Activated CD8-positive, alpha-beta T cell treated with anti-CD3 and anti-CD28 coated beads for 36 hours (primary cell): ENCODE measurements at regions of chr19 and their contacts with region 1.

Region 1: DNA sequence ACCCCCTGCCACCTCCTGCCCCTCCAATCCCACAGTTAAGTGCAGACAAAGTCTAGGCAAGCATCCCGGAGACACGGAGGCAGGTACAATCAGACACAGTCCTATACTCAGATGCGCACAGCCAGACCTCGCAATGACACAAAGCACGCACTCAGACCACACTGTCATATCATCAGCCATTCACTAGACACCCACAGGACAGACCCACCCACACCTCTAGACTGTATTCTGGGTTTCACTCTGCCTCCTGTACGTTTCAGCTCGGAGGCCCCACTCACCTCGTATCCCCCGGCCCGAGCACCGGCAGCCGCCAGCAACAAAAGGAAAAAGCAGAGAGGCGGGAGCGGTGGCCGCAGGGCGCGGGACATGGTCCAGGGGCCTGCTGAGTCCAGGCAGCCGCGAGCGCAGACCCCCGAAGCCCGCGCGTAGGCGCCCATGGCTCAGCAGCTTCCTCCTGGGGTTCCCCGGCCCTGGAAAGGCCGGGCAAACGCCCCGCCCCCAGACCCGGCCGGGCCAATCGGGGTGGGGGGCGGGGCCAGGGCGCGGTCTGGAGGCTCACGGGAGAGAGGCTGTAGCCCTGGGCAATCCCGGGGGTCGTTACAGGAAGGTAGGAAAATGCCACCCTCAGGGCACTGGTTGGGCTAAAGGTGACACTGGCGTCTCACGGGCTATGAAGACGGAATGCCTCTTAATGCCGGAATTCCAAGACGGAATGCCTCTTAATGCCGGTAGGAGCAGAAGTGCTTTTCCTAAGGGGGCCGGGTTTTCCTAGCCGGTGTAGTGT is at the starts of genes MAN2B1 and WDR83:
- DNase-seq: peak; percentile 88
- ATAC-seq: peak; percentile 74
- H3K4me3 Mint-ChIP-seq: peak within 1 kb of the TSS; percentile 99
- H3K27ac Mint-ChIP-seq: peak within 1 kb of the TSS; percentile 95
- H3K4me1 Mint-ChIP-seq: peaks cover 37% of the 10 kb centered on the region
- H3K27me3 Mint-ChIP-seq: no peaks in the 10 kb centered on the region
- CTCF ChIP-seq: no peak
- total RNA-seq, gene MAN2B1: 127 to 135 TPM
- total RNA-seq, gene WDR83: 17.5 to 23.2 TPM

Region 2: DNA sequence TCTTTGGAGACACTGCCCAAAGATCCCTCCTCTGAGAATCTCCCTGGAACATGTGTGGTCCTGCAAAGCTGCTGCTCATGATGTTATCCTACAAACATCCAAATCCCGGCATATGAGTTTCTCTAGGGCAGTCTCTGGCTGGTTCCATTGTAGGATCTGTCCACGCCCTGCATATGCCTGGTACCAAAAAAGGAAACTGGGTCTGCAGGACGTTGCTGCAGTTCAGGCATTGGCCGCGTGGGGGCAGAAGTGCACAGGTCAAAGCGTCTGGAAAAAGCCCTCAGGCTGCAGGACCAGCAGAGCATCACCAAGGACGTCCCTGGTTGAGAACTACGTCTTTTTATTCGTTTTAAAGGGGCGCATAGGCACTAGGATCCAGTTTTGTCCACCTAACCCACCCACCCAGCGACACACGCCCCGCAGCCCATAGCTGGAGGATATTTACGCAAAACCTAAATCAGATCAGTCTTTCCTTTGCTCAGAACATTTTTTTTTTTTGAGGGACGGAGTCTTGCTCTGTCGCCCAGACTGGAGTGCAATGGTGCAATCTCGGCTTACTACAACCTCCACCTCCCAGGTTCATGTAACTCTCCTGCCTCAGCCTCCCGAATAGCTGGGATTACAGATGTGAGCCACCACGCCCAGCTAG is 102.3 kb before region 1 on chr19:
- CTCF ChIA-PET with region 1: interaction called, 19 read pairs
- POLR2A ChIA-PET with region 1: no interaction called
- intact Hi-C with region 1: loop called (anchors 5 kb)
- DNase-seq: peak; percentile 96
- ATAC-seq: peak; percentile 99
- H3K4me3 Mint-ChIP-seq: no peak overlapping the region
- H3K27ac Mint-ChIP-seq: no peak overlapping the region
- H3K4me1 Mint-ChIP-seq: peaks cover 4% of the 10 kb centered on the region
- H3K27me3 Mint-ChIP-seq: no peaks in the 10 kb centered on the region
- CTCF ChIP-seq: peak; percentile 85

Region 3: GRCh38 chr19:12580163-12580694 is 86.2 kb before region 1 on chr19:
- CTCF ChIA-PET with region 1: no interaction called
- POLR2A ChIA-PET with region 1: no interaction called
- intact Hi-C with region 1: no loop called
- DNase-seq: no peak
- ATAC-seq: no peak
- H3K4me3 Mint-ChIP-seq: no peak overlapping the region
- H3K27ac Mint-ChIP-seq: no peak overlapping the region
- H3K4me1 Mint-ChIP-seq: no peaks in the 10 kb centered on the region
- H3K27me3 Mint-ChIP-seq: no peaks in the 10 kb centered on the region
- CTCF ChIP-seq: no peak

Region 4: GRCh38 chr19:12610540-12611360 is 55.7 kb before region 1 on chr19 and contains the starts of genes ZNF490 and ZNF791:
- CTCF ChIA-PET with region 1: interaction called, 5 read pairs
- POLR2A ChIA-PET with region 1: interaction called, 5 read pairs
- intact Hi-C with region 1: loop called (anchors 10 kb)
- DNase-seq: peak; percentile 99
- ATAC-seq: peak; percentile 94
- H3K4me3 Mint-ChIP-seq: peak within 1 kb of the TSS; percentile 94
- H3K27ac Mint-ChIP-seq: peak within 1 kb of the TSS; percentile 99
- H3K4me1 Mint-ChIP-seq: peaks cover 29% of the 10 kb centered on the region
- H3K27me3 Mint-ChIP-seq: no peaks in the 10 kb centered on the region
- CTCF ChIP-seq: no peak
- total RNA-seq, gene ZNF490: 6.8 to 9.3 TPM
- total RNA-seq, gene ZNF791: 15.1 to 16.7 TPM

Region 5: GRCh38 chr19:12639901-12640613 is 26.4 kb before region 1 on chr19:
- CTCF ChIA-PET with region 1: interaction called, 11 read pairs
- POLR2A ChIA-PET with region 1: interaction called, 5 read pairs
- intact Hi-C with region 1: no loop called
- DNase-seq: peak; percentile 96
- ATAC-seq: peak; percentile 93
- H3K4me3 Mint-ChIP-seq: peak overlapping the region; percentile 73
- H3K27ac Mint-ChIP-seq: peak overlapping the region; percentile 84
- H3K4me1 Mint-ChIP-seq: peaks cover 23% of the 10 kb centered on the region
- H3K27me3 Mint-ChIP-seq: no peaks in the 10 kb centered on the region
- CTCF ChIP-seq: peak; percentile 89

Region 6: DNA sequence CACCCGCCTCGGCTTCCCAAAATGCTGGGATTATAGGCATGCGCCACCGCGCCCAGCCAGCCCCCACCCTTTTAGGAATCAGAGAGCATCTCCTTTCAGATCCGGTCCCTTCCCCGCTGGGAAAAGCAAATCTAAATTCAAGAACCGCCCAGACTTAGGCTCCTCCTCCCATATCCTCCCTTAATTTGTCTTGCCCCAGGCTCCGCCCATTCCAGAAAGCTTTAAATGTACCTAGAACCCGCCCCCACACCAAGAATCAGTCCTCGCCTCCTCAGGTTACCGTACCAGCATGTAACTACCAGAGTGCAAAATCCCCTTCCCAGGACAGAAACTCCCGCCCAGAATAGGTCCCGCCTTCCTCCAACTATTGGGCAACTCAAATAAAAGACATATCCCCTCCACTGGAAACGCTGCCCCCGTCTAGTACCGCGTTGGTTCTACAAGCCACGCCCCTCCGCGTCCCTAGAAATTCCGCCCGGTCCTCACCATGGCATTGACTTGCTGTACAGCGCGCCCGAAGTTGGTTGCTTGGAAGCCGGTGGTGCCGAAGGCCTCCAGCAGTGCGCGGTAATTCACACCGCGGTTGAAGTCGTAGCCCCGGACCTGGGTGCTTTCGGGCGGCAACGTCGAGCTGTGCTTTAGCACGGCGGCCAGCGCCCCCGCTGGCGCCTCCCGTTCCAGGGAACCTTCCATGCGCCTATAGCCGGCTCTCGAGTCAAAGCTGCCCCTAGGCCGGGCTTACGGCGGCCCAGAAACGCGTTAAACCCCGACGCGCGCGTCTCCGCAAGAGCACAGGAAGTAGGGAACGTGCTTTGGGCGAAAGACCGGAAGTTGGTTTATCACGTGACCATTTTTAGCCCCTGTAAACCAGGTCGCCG is 14.9 kb after region 1 on chr19 and contains the start of gene DHPS:
- CTCF ChIA-PET with region 1: interaction called, 20 read pairs
- POLR2A ChIA-PET with region 1: interaction called, 29 read pairs
- intact Hi-C with region 1: no loop called
- DNase-seq: peak; percentile 97
- ATAC-seq: peak; percentile 89
- H3K4me3 Mint-ChIP-seq: peak within 1 kb of the TSS; percentile 93
- H3K27ac Mint-ChIP-seq: peak within 1 kb of the TSS; percentile 94
- H3K4me1 Mint-ChIP-seq: peaks cover 25% of the 10 kb centered on the region
- H3K27me3 Mint-ChIP-seq: no peaks in the 10 kb centered on the region
- CTCF ChIP-seq: no peak
- total RNA-seq, gene DHPS: 113 TPM